Activated CD4-positive, alpha-beta T cell treated with anti-CD3 and anti-CD28 coated beads, Interleukin-2, amount 10 ng/mL, durations not matched to agents 24 days and 14 days (primary cell): ENCODE measurements at regions of chr6 and their contacts with region 1.

Region 1: DNA sequence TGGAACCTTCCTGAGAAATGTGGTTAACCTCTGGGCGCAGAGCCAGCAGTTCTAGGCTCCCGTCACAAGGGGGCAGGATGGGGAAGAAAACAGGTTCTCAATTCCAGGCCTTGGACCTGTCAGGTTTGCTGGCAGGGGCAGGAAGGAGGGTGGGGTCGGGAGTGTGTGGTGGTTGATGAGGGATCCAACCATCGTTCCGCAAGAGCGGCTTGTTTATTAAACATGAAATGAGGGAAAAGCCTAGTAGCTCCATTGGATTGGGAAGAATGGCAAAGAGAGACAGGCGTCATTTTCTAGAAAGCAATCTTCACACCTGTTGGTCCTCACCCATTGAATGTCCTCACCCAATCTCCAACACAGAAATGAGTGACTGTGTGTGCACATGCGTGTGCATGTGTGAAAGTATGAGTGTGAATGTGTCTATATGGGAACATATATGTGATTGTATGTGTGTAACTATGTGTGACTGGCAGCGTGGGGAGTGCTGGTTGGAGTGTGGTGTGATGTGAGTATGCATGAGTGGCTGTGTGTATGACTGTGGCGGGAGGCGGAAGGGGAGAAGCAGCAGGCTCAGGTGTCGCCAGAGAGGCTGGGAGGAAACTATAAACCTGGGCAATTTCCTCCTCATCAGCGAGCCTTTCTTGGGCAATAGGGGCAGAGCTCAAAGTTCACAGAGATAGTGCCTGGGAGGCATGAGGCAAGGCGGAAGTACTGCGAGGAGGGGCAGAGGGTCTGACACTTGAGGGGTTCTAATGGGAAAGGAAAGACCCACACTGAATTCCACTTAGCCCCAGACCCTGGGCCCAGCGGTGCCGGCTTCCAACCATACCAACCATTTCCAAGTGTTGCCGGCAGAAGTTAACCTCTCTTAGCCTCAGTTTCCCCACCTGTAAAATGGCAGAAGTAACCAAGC is 29.6 kb downstream of the SRSF3 start:
- DNase-seq: peak; percentile 94
- H3K4me3 Mint-ChIP-seq: no peak overlapping the region
- H3K27ac Mint-ChIP-seq: peak overlapping the region; percentile 62
- H3K4me1 Mint-ChIP-seq: peaks cover 25% of the 10 kb centered on the region
- H3K27me3 Mint-ChIP-seq: no peaks in the 10 kb centered on the region

Region 2: GRCh38 chr6:36724514-36725390 is 100.9 kb after region 1 on chr6:
- intact Hi-C with region 1: loop called (anchors 1 kb)
- DNase-seq: peak; percentile 84
- H3K4me3 Mint-ChIP-seq: no peak overlapping the region
- H3K27ac Mint-ChIP-seq: no peak overlapping the region
- H3K4me1 Mint-ChIP-seq: peaks cover 33% of the 10 kb centered on the region
- H3K27me3 Mint-ChIP-seq: peaks cover 2% of the 10 kb centered on the region